BJ (cell line): ENCODE measurements at regions of chr20 and their contacts with region 1.

Region 1: GRCh38 chr20:47356526-47357295 is at the start of gene ZMYND8:
- DNase-seq: peak; percentile 76
- H3K4me3 ChIP-seq: no peak within 1 kb of the TSS
- H3K27me3 ChIP-seq: no peaks in the 10 kb centered on the region
- CTCF ChIP-seq: no peak
- polyA plus RNA-seq, gene ZMYND8: 11.8 and 12.7 TPM in 2 replicates

Region 2: DNA sequence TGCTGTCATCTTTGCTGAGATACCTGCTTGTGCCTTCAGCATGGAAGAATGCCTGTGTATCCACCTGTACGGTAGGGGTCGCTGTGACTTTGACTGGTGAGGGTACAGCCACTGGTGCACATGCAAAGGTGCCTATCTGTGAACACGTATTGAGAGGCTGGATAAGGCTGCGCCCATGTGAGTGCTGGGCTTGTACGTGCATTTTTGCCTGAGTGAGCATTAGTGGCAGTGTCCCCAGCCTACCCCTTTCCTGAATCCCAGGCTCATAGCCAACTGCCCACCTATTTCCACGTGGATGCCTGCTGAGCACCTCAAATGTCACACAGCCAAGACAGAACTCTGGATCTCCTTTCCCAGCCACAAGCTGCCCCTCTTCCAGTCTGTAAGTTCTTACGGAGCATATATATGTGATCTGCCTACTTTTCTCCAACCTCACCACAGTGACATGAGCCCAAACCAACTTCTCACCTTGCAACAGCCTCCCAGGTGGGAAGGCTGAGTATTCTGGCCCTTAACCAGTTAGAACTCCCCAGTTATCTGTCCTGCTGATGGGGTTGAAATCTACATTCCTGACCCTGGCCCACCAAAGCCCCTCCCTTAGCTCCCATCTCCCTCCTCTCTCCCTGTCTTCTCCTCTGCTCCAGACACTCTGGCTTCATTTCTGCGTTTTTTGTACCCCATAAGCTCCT is 648.4 kb before region 1 on chr20:
- CTCF ChIA-PET with region 1: no interaction called
- POLR2A ChIA-PET with region 1: interaction called, 22 read pairs
- DNase-seq: no peak
- H3K4me3 ChIP-seq: no peak overlapping the region
- H3K27me3 ChIP-seq: no peaks in the 10 kb centered on the region
- CTCF ChIP-seq: peak; percentile 19; the same call in 1 of the 2 replicates

Region 3: DNA sequence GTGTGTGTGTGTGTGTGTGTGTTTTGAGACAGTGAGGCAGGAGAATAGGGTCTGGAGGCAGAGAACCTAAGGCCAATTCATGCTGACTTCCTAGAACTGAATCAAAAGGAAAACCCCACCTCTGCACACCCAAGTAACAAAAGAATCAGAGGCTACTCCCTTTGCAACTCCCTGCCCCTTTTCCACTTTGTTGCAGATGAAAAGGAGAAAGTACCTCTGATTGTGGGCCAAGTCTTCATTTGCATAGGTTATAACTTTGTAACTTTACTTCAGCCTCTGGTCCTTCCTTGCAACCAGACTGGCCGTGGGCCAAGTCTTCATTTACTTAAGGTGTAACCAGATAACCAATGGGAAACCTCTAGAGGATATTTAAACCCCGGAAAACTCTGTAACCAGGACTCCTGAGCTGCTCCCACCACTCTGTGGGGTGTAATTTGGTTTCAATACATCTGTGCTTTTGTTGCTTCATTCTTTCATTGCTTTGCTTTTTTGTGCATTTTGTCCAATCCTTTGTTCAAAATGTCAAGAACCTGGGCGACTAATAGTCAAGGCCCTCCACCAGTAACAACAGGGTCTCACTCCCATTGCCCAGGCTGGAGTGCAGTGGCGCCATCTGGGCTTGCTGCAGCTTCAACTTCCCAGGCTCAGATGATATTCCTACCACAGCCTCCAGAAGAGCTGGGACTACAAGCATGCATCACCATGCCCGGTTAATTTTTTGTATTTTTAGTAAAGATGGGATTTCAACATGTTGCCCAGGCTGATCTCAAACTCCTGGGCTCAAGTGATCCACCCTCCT is 293.1 kb before region 1 on chr20:
- CTCF ChIA-PET with region 1: no interaction called
- POLR2A ChIA-PET with region 1: no interaction called
- DNase-seq: no peak
- H3K4me3 ChIP-seq: no peak overlapping the region
- H3K27me3 ChIP-seq: no peaks in the 10 kb centered on the region
- CTCF ChIP-seq: no peak

Region 4: DNA sequence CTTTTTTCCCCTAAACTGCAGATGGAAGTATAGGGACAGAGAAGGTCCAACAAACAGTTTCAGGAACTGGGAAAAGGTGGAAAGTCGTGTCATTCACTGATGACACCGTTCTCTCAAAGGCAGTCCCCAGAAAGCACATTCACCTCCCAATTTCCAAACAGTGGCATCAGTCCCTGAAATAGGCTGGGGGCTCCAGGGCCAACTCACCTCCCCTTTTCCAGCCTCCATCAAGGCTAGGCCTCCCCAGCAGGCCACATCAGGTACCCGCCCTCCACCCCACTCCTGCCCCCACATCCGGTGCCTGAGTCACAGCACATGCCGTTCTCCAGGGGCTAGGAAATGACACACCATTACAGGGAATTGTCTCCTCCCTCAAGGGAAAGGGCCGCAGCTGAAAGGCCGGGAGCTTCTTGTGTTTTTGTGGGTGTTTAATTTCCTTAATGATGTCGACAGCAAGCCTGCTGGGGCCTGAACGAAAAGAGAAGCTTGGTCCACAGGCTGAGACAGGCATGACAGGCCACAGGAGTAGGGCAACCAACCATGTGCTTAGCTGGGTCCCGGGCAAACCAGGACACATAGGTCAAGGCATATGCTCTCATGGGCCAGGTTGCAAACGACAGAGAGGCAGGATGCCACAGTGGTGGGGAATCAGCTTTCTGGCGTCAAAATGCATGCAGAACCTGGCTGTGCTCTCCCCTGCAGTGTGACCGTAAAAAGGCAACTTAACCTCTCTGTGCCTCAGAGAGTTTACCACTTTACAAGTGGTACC is 39.4 kb before region 1 on chr20:
- CTCF ChIA-PET with region 1: interaction called, 7 read pairs
- POLR2A ChIA-PET with region 1: interaction called, 22 read pairs
- DNase-seq: peak; percentile 79
- H3K4me3 ChIP-seq: no peak overlapping the region
- H3K27me3 ChIP-seq: no peaks in the 10 kb centered on the region
- CTCF ChIP-seq: no peak

Region 5: DNA sequence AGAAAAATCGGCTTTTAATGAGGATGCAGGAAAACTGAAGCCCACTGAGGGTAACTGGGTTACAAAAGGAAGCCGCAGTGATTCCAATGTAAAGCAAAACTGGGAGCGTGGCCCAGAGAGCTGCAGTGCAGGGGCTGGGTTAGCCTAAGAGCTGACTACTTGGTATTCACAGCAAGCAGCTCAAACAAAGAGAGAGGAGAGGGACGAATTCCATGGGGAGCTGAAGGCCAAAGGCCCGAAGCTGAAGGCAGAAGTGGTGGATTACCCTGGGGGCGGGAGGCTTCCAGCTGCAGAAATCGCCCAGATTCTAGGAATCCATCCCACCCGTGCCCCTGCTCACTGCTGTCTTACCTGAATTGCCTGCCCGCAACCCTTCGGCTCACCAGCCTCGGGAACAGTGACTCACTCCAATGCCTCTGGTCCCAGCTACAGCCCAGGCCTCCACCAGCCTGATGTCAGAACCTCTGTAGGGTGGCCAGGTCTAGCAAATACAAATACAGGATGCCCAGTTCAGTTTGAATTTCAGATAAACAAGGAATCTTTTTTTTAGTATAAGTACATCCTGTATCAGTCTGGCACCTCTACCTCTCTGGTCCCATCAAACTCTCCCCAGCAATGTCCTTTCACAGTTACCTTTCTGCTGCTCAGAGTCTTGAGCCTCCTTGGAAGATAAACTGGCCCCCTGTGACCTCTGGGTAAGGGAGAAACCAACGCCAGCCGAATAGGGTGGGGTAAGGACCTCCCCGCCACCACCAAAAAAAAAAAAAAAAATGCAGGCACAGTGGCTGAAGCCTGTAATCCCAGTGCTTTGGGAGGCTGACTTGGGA is 14.4 kb after region 1 on chr20:
- CTCF ChIA-PET with region 1: no interaction called
- POLR2A ChIA-PET with region 1: interaction called, 12 read pairs
- DNase-seq: no peak
- H3K4me3 ChIP-seq: no peak overlapping the region
- H3K27me3 ChIP-seq: no peaks in the 10 kb centered on the region
- CTCF ChIP-seq: no peak

Region 6: GRCh38 chr20:47406849-47407666 is 50.3 kb after region 1 on chr20:
- CTCF ChIA-PET with region 1: no interaction called
- POLR2A ChIA-PET with region 1: no interaction called
- DNase-seq: no peak
- H3K4me3 ChIP-seq: no peak overlapping the region
- H3K27me3 ChIP-seq: no peaks in the 10 kb centered on the region
- CTCF ChIP-seq: no peak